Calu3 (cell line): ENCODE measurements at regions of chr7 and their contacts with region 1.

Region 1: GRCh38 chr7:51789489-51789888 is 472.9 kb upstream of the COBL start:
- DNase-seq: no peak
- H3K4me3 Mint-ChIP-seq: no peak overlapping the region
- H3K27ac Mint-ChIP-seq: no peak overlapping the region
- H3K4me1 Mint-ChIP-seq: no peaks in the 10 kb centered on the region
- H3K27me3 Mint-ChIP-seq: no peaks in the 10 kb centered on the region
- CTCF ChIP-seq: peak; percentile 18

Region 2: GRCh38 chr7:51732951-51733350 is 56.5 kb before region 1 on chr7:
- CTCF ChIA-PET with region 1: no interaction called
- intact Hi-C with region 1: loop called (anchors 10 kb)
- DNase-seq: no peak
- H3K4me3 Mint-ChIP-seq: no peak overlapping the region
- H3K27ac Mint-ChIP-seq: no peak overlapping the region
- H3K4me1 Mint-ChIP-seq: no peaks in the 10 kb centered on the region
- H3K27me3 Mint-ChIP-seq: peaks cover 7% of the 10 kb centered on the region
- CTCF ChIP-seq: no peak

Region 3: GRCh38 chr7:53397911-53398310 is 1608.4 kb after region 1 on chr7:
- CTCF ChIA-PET with region 1: no interaction called
- intact Hi-C with region 1: no loop called
- DNase-seq: no peak
- H3K4me3 Mint-ChIP-seq: no peak overlapping the region
- H3K27ac Mint-ChIP-seq: no peak overlapping the region
- H3K4me1 Mint-ChIP-seq: no peaks in the 10 kb centered on the region
- H3K27me3 Mint-ChIP-seq: no peaks in the 10 kb centered on the region
- CTCF ChIP-seq: no peak